ENCODE measurements at regions of chr2 and their contacts with region 1.

Region 1: DNA sequence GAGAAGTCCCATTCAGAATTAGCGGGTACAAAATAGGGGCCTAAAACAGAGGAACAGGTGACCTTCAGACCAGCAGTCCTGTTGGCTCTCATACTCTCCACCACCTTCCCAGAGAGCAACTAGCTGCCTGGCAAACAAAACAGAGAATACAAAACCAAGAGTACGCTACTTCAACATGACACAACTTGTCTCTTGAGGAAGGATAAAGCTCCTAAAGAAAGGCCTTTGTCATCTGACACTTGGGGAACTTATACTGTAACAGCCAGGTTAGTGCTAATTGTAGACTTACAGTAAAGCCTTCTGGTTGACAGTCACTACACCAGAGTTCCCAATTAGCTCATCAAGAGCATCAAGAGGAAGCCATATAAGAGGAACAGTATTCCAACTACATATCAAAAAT is 282.1 kb upstream of the NT5C1B start:
- DNase-seq: no peak
- H3K4me3 ChIP-seq: no peak overlapping the region
- H3K27ac ChIP-seq: no peak overlapping the region
- H3K4me1 ChIP-seq: no peaks in the 10 kb centered on the region
- H3K27me3 ChIP-seq: no peaks in the 10 kb centered on the region
- CTCF ChIP-seq: no peak

Region 2: DNA sequence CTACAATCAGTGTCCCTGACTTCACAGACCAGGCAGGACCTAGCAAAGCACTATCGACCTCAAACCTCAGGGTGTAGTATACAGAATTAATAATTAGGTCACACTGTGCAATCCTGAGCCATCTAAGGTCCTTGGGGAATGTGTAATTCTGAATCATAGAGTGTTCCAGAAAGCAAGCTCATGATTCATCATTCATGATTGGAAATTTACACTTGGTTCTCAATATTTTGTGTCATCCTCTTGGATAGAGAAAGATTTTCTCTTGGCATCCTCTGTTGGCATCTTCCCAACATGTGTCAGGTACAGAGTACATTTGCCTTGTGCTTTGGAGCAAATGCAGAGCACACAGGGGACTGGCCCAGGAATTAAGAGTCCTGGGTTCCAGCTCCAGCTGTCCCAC is 37.1 kb before region 1 on chr2:
- CTCF ChIA-PET with region 1: no interaction called
- POLR2A ChIA-PET with region 1: no interaction called
- intact Hi-C with region 1: no loop called
- DNase-seq: peak in 1 of 2 experiments; percentile 55
- H3K4me3 ChIP-seq: no peak overlapping the region
- H3K27ac ChIP-seq: no peak overlapping the region
- H3K4me1 ChIP-seq: peaks cover 41% of the 10 kb centered on the region
- H3K27me3 ChIP-seq: no peaks in the 10 kb centered on the region
- CTCF ChIP-seq: no peak

Region 3: DNA sequence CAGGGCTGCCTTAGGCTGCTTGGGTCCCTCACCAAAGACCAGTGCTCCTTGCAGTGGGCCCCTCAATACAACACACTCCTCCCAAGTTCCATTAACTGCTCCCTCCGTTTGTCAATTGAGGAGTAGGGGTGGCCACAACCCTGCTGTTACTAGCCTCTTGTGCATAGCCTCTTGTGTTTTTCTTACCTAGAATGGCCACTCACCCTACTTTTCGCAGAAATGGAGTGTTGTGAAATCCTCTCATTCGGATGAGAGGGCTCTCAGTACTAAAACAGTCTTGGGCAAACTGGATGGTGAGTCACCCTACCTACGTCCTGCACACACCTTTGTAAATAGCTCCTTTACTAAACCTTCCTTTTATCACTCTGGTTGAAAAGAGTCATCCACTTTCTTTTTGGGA is 233.1 kb after region 1 on chr2:
- CTCF ChIA-PET with region 1: no interaction called
- POLR2A ChIA-PET with region 1: interaction called, 16 read pairs
- intact Hi-C with region 1: no loop called
- DNase-seq: peak; percentile 40 to 89
- H3K4me3 ChIP-seq: peak overlapping the region; percentile 10; the same call in 1 of the 2 replicates
- H3K27ac ChIP-seq: peak overlapping the region; percentile 57
- H3K4me1 ChIP-seq: peaks cover 24% of the 10 kb centered on the region
- H3K27me3 ChIP-seq: no peaks in the 10 kb centered on the region
- CTCF ChIP-seq: no peak

Region 4: DNA sequence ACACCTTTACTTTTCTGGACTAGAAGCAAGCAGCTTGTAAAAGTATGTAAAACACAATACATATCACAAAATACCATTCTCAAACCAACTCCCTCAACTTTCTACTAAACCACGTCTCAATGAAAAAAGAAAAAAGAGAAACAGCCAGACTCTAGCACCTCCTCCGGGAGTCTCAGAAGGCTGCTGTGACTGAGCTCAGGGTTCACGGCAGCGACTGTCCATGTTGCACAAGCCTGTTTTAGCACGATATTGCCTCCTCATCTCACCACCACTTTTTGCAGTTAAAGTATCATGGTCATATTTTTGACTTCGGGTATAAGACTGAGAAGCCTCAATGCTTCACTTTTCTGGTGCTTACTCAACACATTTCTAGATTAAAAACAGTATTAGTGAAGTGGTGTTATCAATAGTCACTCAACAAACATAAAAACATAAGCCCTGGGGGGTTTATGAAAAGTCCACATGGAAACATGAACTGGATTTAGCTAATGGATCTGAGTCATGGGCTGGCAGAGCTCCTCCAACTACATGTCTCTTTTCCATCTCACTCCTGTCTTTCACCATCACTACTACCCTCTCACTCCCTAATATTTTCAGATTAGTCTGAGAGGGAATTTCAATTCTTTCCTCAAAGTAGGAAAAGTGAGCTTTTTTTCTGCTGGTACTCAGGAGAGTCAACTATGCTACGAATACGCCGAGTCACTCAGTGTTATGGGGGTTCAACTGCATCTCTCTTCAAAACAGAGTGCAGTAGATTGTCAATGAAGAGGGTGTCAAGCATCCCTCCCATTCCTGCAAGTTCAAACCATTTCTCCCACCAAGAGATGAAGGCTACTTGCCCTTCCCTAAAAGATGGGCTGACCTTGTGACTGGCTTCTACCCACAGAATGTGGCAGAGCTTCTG is 373.3 kb after region 1 on chr2:
- CTCF ChIA-PET with region 1: no interaction called
- POLR2A ChIA-PET with region 1: no interaction called
- intact Hi-C with region 1: no loop called
- DNase-seq: no peak
- H3K4me3 ChIP-seq: no peak overlapping the region
- H3K27ac ChIP-seq: no peak overlapping the region
- H3K4me1 ChIP-seq: no peaks in the 10 kb centered on the region
- H3K27me3 ChIP-seq: no peaks in the 10 kb centered on the region
- CTCF ChIP-seq: no peak

Measured in PC-9 (cell line).